Ovary (tissue), 10 donors: ENCODE measurements at regions of chr2 and their contacts with region 1.

Region 1: DNA sequence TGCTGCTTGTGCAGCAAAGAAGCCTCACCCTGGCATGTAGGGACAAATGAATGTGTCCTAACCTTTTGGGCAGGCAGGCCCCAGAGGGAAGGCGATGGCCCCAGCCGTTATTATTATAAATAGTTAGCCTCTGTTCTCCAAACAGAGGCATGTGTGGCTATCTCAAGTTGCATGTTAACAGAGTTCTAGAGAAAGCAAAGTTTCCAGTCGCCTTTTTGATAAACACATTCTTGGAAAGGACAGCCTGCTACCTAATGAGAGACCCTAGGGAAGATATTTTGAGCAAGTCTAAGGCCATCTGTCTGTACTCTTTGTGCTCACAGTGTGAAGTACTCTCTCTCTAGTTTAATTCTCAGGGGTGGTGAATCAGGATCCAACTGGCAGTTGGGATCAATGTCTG is 97.4 kb upstream of the FHL2 start:
- DNase-seq: peak in 3 of 5 donors; percentile 52 to 78 (median 52)
- H3K4me3 ChIP-seq: no peak overlapping the region
- H3K27ac ChIP-seq: peak overlapping the region; percentile 27 to 81
- H3K4me1 ChIP-seq: peaks cover 20% of the 10 kb centered on the region
- H3K27me3 ChIP-seq: no peaks in the 10 kb centered on the region
- CTCF ChIP-seq: no peak
- EP300 ChIP-seq: no peak
- POLR2A ChIP-seq: no peak

Region 2: GRCh38 chr2:105377819-105378218 is 118.5 kb before region 1 on chr2:
- intact Hi-C with region 1: loop called in 1 of 4 experiments (anchors 5 kb)
- DNase-seq: peak in 1 of 5 donors; percentile 36
- H3K4me3 ChIP-seq: no peak overlapping the region
- H3K27ac ChIP-seq: peak overlapping the region; percentile 10 to 98
- H3K4me1 ChIP-seq: peaks cover 63% of the 10 kb centered on the region
- H3K27me3 ChIP-seq: no peaks in the 10 kb centered on the region
- CTCF ChIP-seq: no peak
- EP300 ChIP-seq: no peak
- POLR2A ChIP-seq: no peak

Region 3: DNA sequence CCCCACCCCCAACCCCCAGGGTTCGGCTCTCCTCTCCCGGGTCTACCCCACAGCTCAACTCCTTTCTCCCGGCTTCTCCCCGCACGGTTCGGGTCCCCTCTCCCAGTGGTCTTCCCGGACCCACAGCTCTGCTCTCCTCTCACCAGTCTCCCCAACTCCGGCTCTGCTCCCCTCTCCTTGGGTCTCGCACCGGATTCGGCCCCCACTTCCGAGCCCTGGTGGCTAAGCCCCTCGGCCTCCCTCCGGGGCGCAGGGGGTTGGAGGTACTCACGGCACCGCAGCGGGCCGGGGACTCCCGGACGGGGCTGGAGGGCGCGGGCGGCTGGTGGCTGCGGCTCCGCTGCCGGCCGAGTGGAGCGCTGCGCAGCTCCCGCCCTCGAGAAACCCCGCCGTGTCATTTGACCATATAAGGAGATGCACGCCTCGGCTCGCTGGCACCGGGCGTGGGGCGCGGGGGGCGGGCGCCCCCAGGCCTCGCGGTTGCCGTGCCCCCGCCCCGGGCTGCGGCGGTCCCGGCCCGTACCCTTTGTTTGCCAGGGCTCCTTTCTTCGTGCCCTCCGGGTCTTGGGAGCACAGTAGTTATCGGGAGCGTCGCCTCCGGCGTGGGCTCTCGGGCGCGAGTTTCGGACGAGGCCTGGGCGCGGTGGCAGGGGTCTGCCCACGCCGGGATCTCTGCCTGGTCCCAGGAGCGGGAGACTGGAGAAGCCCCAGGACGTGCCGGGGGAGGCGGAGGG is 97.4 kb before region 1 on chr2 and contains the start of gene FHL2:
- intact Hi-C with region 1: loop called in 1 of 4 experiments (anchors 10 kb)
- DNase-seq: peak; percentile 82 to 91 (median 86)
- H3K4me3 ChIP-seq: peak within 1 kb of the TSS; percentile 98
- H3K27ac ChIP-seq: peak within 1 kb of the TSS; percentile 86 to 98
- H3K4me1 ChIP-seq: peaks cover 4% of the 10 kb centered on the region
- H3K27me3 ChIP-seq: no peaks in the 10 kb centered on the region
- CTCF ChIP-seq: peak in 2 of 3 donors; percentile 48 to 72
- EP300 ChIP-seq: no peak
- POLR2A ChIP-seq: peak; percentile 81
- total RNA-seq, gene FHL2: 300 to 1,049 (median 495) TPM

Region 4: GRCh38 chr2:105460048-105460732 is 36.1 kb before region 1 on chr2:
- intact Hi-C with region 1: loop called in 1 of 4 experiments (anchors 5 kb)
- DNase-seq: peak; percentile 83 to 95 (median 87)
- H3K4me3 ChIP-seq: no peak overlapping the region
- H3K27ac ChIP-seq: peak overlapping the region; percentile 41 to 86
- H3K4me1 ChIP-seq: peaks cover 12% of the 10 kb centered on the region
- H3K27me3 ChIP-seq: no peaks in the 10 kb centered on the region
- CTCF ChIP-seq: no peak
- EP300 ChIP-seq: no peak
- POLR2A ChIP-seq: no peak

Region 5: DNA sequence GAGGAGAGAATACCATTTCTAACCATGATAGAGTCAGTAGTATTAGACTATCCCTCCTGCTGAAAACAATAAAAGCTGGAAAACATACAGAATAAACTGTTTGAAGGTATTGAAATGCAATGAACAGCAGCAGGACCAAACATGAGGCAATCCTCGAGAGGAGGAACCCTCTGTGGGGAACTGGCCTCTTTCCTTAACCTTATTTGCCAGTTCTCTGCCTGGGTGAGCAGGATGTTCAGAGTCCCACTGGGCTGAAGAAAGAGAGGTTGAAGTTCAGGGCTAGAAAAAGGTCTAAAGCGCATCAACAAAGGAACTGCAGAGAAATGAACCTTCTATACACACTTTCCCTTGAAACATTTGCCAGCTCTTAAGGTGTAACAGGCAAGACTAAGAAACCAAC is 17.6 kb before region 1 on chr2:
- intact Hi-C with region 1: no loop called
- DNase-seq: no peak
- H3K4me3 ChIP-seq: no peak overlapping the region
- H3K27ac ChIP-seq: no peak overlapping the region
- H3K4me1 ChIP-seq: no peaks in the 10 kb centered on the region
- H3K27me3 ChIP-seq: no peaks in the 10 kb centered on the region
- CTCF ChIP-seq: no peak
- EP300 ChIP-seq: no peak
- POLR2A ChIP-seq: no peak

Region 6: GRCh38 chr2:105754011-105754410 is 257.7 kb after region 1 on chr2:
- intact Hi-C with region 1: no loop called
- DNase-seq: no peak
- H3K4me3 ChIP-seq: no peak overlapping the region
- H3K27ac ChIP-seq: no peak overlapping the region
- H3K4me1 ChIP-seq: peaks cover 27% of the 10 kb centered on the region
- H3K27me3 ChIP-seq: no peaks in the 10 kb centered on the region
- CTCF ChIP-seq: no peak
- EP300 ChIP-seq: no peak
- POLR2A ChIP-seq: no peak